Lower lobe of right lung (tissue), 2 donors: ENCODE measurements at regions of chr11 and their contacts with region 1.

Region 1: GRCh38 chr11:19561011-19561410 is 151.6 kb upstream of the NAV2 start:
- DNase-seq: no peak
- ATAC-seq: no peak
- H3K4me3 ChIP-seq: no peak overlapping the region
- H3K27ac ChIP-seq: no peak overlapping the region
- H3K4me1 ChIP-seq: peaks cover 21% of the 10 kb centered on the region
- H3K27me3 ChIP-seq: no peaks in the 10 kb centered on the region
- CTCF ChIP-seq: no peak

Region 2: GRCh38 chr11:19499026-19499669 is 61.9 kb before region 1 on chr11:
- intact Hi-C with region 1: no loop called
- DNase-seq: no peak
- ATAC-seq: peak; percentile 44 to 88
- H3K4me3 ChIP-seq: no peak overlapping the region
- H3K27ac ChIP-seq: peak overlapping the region; percentile 11
- H3K4me1 ChIP-seq: no peaks in the 10 kb centered on the region
- H3K27me3 ChIP-seq: no peaks in the 10 kb centered on the region
- CTCF ChIP-seq: no peak

Region 3: GRCh38 chr11:19742588-19743292 is 181.7 kb after region 1 on chr11:
- intact Hi-C with region 1: loop called (anchors 5 kb)
- DNase-seq: peak; percentile 79
- ATAC-seq: peak; percentile 91 to 94
- H3K4me3 ChIP-seq: no peak overlapping the region
- H3K27ac ChIP-seq: no peak overlapping the region
- H3K4me1 ChIP-seq: peaks cover 10% of the 10 kb centered on the region
- H3K27me3 ChIP-seq: no peaks in the 10 kb centered on the region
- CTCF ChIP-seq: peak; percentile 91

Region 4: DNA sequence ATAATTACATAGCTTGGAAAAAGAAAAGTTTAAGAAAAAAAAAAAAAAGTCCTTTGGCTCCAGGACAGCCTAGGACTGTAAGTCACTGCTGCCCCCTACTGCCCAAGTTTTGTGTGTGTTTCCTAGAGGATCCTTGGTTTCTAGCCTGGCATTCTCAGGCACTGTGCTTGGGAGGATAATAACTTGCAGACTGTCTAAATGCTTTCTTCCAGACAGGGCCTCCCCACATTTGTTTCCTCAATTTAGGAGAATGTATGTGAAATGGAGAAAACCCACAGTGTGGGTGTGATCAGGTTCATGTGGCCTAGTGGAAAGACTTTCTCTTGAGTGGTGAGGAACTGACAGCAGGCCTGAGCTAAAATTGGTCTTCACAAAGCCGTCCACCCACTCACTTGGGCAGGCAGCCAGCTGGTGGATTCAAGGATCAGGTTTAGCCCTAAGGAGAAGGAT is 342.6 kb after region 1 on chr11:
- intact Hi-C with region 1: loop called (anchors 10 kb)
- DNase-seq: peak; percentile 68
- ATAC-seq: peak; percentile 80 to 84
- H3K4me3 ChIP-seq: no peak overlapping the region
- H3K27ac ChIP-seq: no peak overlapping the region
- H3K4me1 ChIP-seq: no peaks in the 10 kb centered on the region
- H3K27me3 ChIP-seq: no peaks in the 10 kb centered on the region
- CTCF ChIP-seq: peak; percentile 78